Caco-2 (cell line): ENCODE measurements at regions of chr2 and their contacts with region 1.

Region 1: DNA sequence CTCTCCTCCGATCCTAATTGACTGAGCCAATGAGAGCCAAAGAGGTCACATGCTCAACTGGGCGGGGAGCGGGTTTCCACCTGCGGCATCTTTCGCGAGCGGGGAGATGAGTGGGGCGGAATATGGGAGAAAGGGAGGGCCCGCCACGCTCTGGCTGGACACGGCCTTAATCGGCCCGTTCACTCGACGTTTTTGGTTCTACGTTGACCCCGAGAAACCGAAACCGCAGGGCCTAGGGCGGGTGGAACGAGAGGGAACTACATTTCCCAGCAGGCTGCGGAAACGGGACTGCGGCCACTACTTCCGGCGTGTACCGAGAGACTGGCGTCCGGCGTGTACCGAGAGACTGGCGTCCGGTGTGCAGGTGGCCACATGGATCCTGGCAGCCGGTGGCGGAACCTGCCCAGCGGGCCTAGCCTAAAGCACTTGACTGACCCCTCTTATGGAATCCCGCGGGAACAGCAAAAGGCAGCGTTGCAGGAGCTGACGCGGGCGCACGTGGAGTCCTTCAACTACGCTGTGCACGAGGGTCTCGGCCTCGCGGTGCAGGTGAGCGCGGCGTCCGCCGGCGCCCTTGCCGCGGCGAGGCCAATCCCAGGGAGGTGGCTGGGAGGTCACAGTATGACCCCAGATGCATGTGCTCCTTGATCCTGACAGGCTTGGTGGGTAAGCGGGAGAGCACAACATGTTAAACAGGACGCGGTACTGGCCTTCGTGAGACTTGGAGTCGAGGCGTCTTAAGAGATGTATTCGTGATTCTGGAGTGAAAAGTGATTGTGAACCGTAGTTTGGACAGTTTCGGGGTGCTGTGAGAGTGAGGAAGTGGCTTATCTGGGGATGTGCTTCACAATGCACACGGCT is at the start of gene POLR1B:
- DNase-seq: peak; percentile 92 to 93
- H3K4me3 ChIP-seq: peak within 1 kb of the TSS; percentile 89
- H3K4me3 Mint-ChIP-seq: no peak within 1 kb of the TSS
- H3K27ac Mint-ChIP-seq: no peak within 1 kb of the TSS
- H3K4me1 ChIP-seq: peaks cover 10% of the 10 kb centered on the region; the same call in 1 of the 2 replicates
- H3K4me1 Mint-ChIP-seq: no peaks in the 10 kb centered on the region
- H3K27me3 ChIP-seq: no peaks in the 10 kb centered on the region
- H3K27me3 Mint-ChIP-seq: no peaks in the 10 kb centered on the region
- CTCF ChIP-seq: peak in 1 of 2 experiments; percentile 24
- total RNA-seq, gene POLR1B: 38.3 and 42.2 TPM in 2 replicates

Region 2: DNA sequence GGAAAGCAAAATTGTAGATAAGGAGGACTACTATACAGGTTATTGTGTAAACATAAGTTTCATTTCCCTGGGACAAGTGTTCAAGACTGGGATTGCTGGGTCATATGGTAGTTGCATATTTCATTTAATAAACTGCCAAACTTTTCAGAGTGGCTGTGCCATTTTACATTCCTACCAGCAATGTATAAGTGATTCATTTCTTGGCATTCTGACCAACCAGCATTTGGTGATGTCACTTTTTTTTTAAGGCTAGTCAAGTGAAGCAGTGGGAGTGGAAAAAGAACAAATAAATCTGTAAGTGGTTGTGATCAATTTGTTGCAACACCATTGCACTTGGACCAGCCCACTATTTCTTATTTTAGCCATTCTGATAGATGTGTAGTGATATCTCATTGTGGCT is 36.9 kb after region 1 on chr2:
- CTCF ChIA-PET with region 1: interaction called, 3 read pairs
- POLR2A ChIA-PET with region 1: no interaction called
- intact Hi-C with region 1: loop called (anchors 1 kb)
- DNase-seq: no peak
- H3K4me3 ChIP-seq: no peak overlapping the region
- H3K4me3 Mint-ChIP-seq: no peak overlapping the region
- H3K27ac Mint-ChIP-seq: no peak overlapping the region
- H3K4me1 ChIP-seq: peaks cover 5% of the 10 kb centered on the region
- H3K4me1 Mint-ChIP-seq: no peaks in the 10 kb centered on the region
- H3K27me3 ChIP-seq: no peaks in the 10 kb centered on the region
- H3K27me3 Mint-ChIP-seq: no peaks in the 10 kb centered on the region
- CTCF ChIP-seq: no peak

Region 3: GRCh38 chr2:112584134-112584890 is 42.0 kb after region 1 on chr2 and contains the start of gene CHCHD5:
- CTCF ChIA-PET with region 1: interaction called, 3 read pairs
- POLR2A ChIA-PET with region 1: no interaction called
- intact Hi-C with region 1: loop called (anchors 1 kb)
- DNase-seq: peak; percentile 95 to 96
- H3K4me3 ChIP-seq: peak within 1 kb of the TSS; percentile 67
- H3K4me3 Mint-ChIP-seq: peak within 1 kb of the TSS; percentile 80
- H3K27ac Mint-ChIP-seq: peak within 1 kb of the TSS; percentile 97
- H3K4me1 ChIP-seq: peaks cover 13% of the 10 kb centered on the region
- H3K4me1 Mint-ChIP-seq: peaks cover 8% of the 10 kb centered on the region
- H3K27me3 ChIP-seq: no peaks in the 10 kb centered on the region
- H3K27me3 Mint-ChIP-seq: no peaks in the 10 kb centered on the region
- CTCF ChIP-seq: no peak
- total RNA-seq, gene CHCHD5: 50.7 and 56.0 TPM in 2 replicates